MCF 10A (cell line): ENCODE measurements at regions of chr9 and their contacts with region 1.

Region 1: DNA sequence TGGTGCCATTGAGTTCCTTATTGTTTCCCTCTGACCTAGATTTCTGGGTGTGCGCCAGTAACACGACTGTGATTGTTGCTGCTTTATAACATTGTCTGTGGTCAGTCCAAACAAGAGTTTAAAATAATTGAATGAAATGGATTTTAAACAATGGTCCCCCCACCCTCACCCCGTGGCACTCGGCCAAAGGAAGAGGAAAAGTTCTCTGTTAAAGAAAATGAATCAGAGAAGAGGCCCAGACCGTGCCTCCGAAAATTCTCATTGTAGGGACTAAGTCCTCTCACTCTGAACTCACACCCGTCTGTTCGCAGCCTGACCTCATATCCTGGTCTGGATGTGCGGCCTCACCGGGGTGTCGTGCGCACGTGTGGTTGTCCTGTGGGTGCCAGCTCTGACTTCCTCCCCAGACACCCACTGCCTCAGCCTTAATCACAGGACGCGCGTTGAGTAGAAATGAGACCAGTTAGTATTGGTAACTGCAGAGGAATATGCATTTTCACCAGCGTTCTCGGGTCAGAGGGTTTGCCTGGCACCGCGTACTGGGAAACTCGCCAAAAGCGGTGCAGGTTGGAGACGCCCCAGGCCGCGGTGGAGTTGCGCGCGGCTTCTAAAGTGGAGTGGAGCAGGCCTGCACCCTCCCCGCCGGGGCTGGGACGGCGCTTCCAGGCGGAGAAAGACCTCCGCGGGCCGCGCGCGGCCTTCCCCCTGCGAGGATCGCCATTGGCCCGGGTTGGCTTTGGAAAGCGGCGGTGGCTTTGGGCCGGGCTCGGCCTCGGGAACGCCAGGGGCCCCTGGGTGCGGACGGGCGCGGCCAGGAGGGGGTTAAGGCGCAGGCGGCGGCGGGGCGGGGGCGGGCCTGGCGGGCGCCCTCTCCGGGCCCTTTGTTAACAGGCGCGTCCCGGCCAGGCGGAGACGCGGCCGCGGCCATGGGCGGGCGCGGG is at the start of gene ABL1:
- DNase-seq: peak; percentile 89
- H3K4me3 Mint-ChIP-seq: peak within 1 kb of the TSS; percentile 90
- H3K27ac Mint-ChIP-seq: peak within 1 kb of the TSS; percentile 99
- H3K4me1 Mint-ChIP-seq: peaks cover 47% of the 10 kb centered on the region
- H3K27me3 Mint-ChIP-seq: no peaks in the 10 kb centered on the region
- CTCF ChIP-seq: no peak
- total RNA-seq, gene ABL1: 67.5 TPM in 2 replicates

Region 2: DNA sequence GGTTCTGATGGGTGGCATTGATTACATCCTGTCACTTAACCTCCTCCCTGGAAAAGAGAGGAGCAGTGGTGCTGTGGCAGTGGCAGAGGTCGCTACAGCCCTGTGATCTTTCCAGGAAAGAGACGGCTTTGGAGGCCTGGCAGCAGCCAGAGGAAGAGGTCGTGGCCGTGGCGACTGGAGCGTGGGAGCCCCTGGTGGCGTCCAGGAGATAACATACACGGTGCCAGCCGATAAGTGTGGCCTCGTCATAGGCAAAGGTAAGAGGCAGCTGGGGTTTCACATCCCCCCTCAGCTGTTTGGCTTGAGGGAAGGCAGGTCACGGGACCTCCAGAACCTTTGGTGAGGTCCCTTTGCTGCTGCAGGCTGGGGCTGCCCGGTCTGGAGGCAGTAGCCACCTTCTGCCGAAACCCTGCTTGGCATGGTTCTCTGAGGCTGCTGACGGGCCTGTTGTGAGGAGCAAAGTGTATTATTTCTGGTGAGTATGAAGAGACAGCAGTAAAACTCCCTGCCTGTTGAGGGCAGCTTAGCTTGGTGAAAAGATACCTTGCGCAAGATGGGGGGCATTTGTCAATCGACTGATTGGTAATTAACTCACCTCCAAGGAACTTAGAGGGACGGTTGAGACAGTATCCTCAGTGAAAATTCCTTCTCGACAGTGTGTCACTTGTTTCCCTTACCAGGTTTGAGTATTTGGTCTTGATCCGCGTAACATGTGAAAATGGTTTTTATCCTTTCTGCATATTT is 208.2 kb before region 1 on chr9:
- CTCF ChIA-PET with region 1: no interaction called
- POLR2A ChIA-PET with region 1: no interaction called
- intact Hi-C with region 1: no loop called
- DNase-seq: no peak
- H3K4me3 Mint-ChIP-seq: no peak overlapping the region
- H3K27ac Mint-ChIP-seq: no peak overlapping the region
- H3K4me1 Mint-ChIP-seq: no peaks in the 10 kb centered on the region
- H3K27me3 Mint-ChIP-seq: no peaks in the 10 kb centered on the region
- CTCF ChIP-seq: no peak

Region 3: GRCh38 chr9:130693426-130694191 is 141.0 kb before region 1 on chr9 and contains the start of gene EXOSC2:
- CTCF ChIA-PET with region 1: no interaction called
- POLR2A ChIA-PET with region 1: interaction called, 11 read pairs
- intact Hi-C with region 1: no loop called
- DNase-seq: peak; percentile 98
- H3K4me3 Mint-ChIP-seq: peak within 1 kb of the TSS; percentile 91
- H3K27ac Mint-ChIP-seq: peak within 1 kb of the TSS; percentile 89
- H3K4me1 Mint-ChIP-seq: peaks cover 41% of the 10 kb centered on the region
- H3K27me3 Mint-ChIP-seq: no peaks in the 10 kb centered on the region
- CTCF ChIP-seq: no peak
- total RNA-seq, gene EXOSC2: 42.3 and 57.7 TPM in 2 replicates

Region 4: GRCh38 chr9:130847327-130848217 is 12.9 kb after region 1 on chr9:
- CTCF ChIA-PET with region 1: interaction called, 3 read pairs
- POLR2A ChIA-PET with region 1: interaction called, 77 read pairs
- intact Hi-C with region 1: loop called (anchors 1 kb)
- DNase-seq: peak; percentile 98
- H3K4me3 Mint-ChIP-seq: peak overlapping the region; percentile 59
- H3K27ac Mint-ChIP-seq: peak overlapping the region; percentile 90
- H3K4me1 Mint-ChIP-seq: peaks cover 53% of the 10 kb centered on the region
- H3K27me3 Mint-ChIP-seq: no peaks in the 10 kb centered on the region
- CTCF ChIP-seq: no peak